ENCODE measurements at regions of chr9 and their contacts with region 1.

Region 1: GRCh38 chr9:93111371-93112115 is 15.5 kb downstream of the CARD19 start:
- DNase-seq: peak; percentile 5 to 33 (median 21)
- H3K4me3 ChIP-seq: no peak overlapping the region
- H3K27ac ChIP-seq: no peak overlapping the region
- H3K4me1 ChIP-seq: peaks cover 7% of the 10 kb centered on the region
- H3K27me3 ChIP-seq: no peaks in the 10 kb centered on the region
- CTCF ChIP-seq: no peak
- EP300 ChIP-seq: no peak
- POLR2A ChIP-seq: no peak

Region 2: GRCh38 chr9:93003552-93004407 is 107.8 kb before region 1 on chr9:
- intact Hi-C with region 1: loop called in 1 of 4 experiments (anchors 5 kb)
- DNase-seq: peak; percentile 69 to 81 (median 76)
- H3K4me3 ChIP-seq: peak overlapping the region; percentile 29
- H3K27ac ChIP-seq: peak overlapping the region in 1 of 2 donors; percentile 8
- H3K4me1 ChIP-seq: peaks cover 3% of the 10 kb centered on the region
- H3K27me3 ChIP-seq: no peaks in the 10 kb centered on the region
- CTCF ChIP-seq: peak; percentile 71 to 82 (median 79)
- EP300 ChIP-seq: no peak
- POLR2A ChIP-seq: no peak